ENCODE measurements at regions of chr15 and their contacts with region 1.

Region 1: GRCh38 chr15:62060113-62060895 is at the start of gene VPS13C:
- DNase-seq: peak; percentile 86
- H3K4me3 ChIP-seq: peak within 1 kb of the TSS; percentile 80 to 90 (median 84)
- H3K27ac ChIP-seq: peak within 1 kb of the TSS; percentile 66
- H3K4me1 ChIP-seq: peaks cover 31% of the 10 kb centered on the region
- H3K27me3 ChIP-seq: no peaks in the 10 kb centered on the region
- CTCF ChIP-seq: peak; percentile 73 to 83
- total RNA-seq, gene VPS13C: 43.3 to 79.9 TPM

Region 2: GRCh38 chr15:61983076-61983475 is 77.2 kb before region 1 on chr15:
- CTCF ChIA-PET with region 1: no interaction called
- dilution Hi-C with region 1: no loop called
- in situ Hi-C with region 1: no loop called
- intact Hi-C with region 1: loop called (anchors 5 kb)
- DNase-seq: peak; percentile 64
- H3K4me3 ChIP-seq: no peak overlapping the region
- H3K27ac ChIP-seq: no peak overlapping the region
- H3K4me1 ChIP-seq: no peaks in the 10 kb centered on the region
- H3K27me3 ChIP-seq: no peaks in the 10 kb centered on the region
- CTCF ChIP-seq: no peak

Region 3: GRCh38 chr15:62089616-62090015 is 29.3 kb after region 1 on chr15:
- CTCF ChIA-PET with region 1: no interaction called
- dilution Hi-C with region 1: no loop called
- in situ Hi-C with region 1: no loop called
- intact Hi-C with region 1: no loop called
- DNase-seq: no peak
- H3K4me3 ChIP-seq: no peak overlapping the region
- H3K27ac ChIP-seq: no peak overlapping the region
- H3K4me1 ChIP-seq: no peaks in the 10 kb centered on the region
- H3K27me3 ChIP-seq: no peaks in the 10 kb centered on the region
- CTCF ChIP-seq: no peak

Region 4: DNA sequence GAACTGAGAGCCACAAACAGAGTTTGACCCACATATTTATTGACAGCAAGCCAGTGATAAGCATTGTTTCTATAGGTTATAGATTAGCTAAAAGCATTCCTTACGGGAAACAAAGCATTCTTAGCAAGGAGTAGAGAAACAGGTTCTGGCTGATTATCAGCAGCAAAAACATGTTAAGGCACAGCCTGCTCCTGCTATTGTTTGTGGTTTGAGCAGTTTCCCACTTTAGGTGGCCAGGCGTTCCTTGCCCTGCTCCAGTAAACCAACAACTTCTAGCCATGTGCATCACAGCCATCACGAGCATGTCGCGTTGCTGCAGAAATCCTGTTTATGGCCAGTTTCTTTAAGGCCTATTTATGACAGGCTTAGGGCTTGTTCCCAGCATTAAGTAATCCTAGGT is 149.5 kb after region 1 on chr15:
- CTCF ChIA-PET with region 1: interaction called, 13 read pairs
- dilution Hi-C with region 1: no loop called
- in situ Hi-C with region 1: no loop called
- intact Hi-C with region 1: no loop called
- DNase-seq: peak; percentile 83
- H3K4me3 ChIP-seq: peak overlapping the region in 1 of 3 experiments; percentile 13
- H3K27ac ChIP-seq: peak overlapping the region; percentile 36
- H3K4me1 ChIP-seq: peaks cover 24% of the 10 kb centered on the region
- H3K27me3 ChIP-seq: no peaks in the 10 kb centered on the region
- CTCF ChIP-seq: no peak